CD4-positive, alpha-beta T cell (primary cell): ENCODE measurements at regions of chr6 and their contacts with region 1.

Region 1: DNA sequence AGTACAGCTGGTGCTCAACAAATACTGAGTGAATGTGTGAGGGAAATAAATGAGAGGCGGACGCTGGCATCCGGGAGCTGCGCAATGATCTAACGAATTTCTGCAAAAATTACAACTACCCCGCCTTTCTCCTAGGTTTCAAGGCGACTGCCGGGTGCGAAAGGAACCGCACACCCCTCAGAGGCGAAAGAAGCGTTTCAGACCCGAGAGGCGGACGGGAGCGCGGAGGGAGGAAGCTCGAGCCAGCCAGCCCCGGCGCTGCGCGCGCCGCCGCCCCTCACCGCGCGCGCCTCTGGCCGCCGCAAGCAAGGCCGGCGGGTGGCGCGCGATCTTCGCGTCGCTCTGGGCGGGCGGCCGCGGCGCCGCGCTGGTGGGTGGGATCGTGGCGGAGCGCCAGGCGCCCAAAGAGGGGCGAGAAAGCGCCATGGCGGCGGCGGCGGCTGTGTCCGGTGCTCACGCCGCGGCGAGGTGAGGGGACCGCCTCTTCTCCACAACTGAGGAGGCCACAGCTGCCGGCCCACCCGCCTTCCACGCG is at the start of gene BLTP3A:
- DNase-seq: peak; percentile 51 to 91 (median 71)
- ATAC-seq: peak; percentile 91
- H3K4me3 ChIP-seq: peak within 1 kb of the TSS; percentile 77
- H3K4me3 Mint-ChIP-seq: peak within 1 kb of the TSS; percentile 99
- H3K27ac ChIP-seq: peak within 1 kb of the TSS; percentile 44 to 73
- H3K27ac Mint-ChIP-seq: peak within 1 kb of the TSS; percentile 97
- H3K4me1 ChIP-seq: peaks cover 22% of the 10 kb centered on the region
- H3K4me1 Mint-ChIP-seq: peaks cover 26% of the 10 kb centered on the region
- H3K27me3 ChIP-seq: no peaks in the 10 kb centered on the region
- H3K27me3 Mint-ChIP-seq: no peaks in the 10 kb centered on the region
- CTCF ChIP-seq: peak; percentile 29
- total RNA-seq, gene BLTP3A: 7.6 to 8.1 TPM

Region 2: DNA sequence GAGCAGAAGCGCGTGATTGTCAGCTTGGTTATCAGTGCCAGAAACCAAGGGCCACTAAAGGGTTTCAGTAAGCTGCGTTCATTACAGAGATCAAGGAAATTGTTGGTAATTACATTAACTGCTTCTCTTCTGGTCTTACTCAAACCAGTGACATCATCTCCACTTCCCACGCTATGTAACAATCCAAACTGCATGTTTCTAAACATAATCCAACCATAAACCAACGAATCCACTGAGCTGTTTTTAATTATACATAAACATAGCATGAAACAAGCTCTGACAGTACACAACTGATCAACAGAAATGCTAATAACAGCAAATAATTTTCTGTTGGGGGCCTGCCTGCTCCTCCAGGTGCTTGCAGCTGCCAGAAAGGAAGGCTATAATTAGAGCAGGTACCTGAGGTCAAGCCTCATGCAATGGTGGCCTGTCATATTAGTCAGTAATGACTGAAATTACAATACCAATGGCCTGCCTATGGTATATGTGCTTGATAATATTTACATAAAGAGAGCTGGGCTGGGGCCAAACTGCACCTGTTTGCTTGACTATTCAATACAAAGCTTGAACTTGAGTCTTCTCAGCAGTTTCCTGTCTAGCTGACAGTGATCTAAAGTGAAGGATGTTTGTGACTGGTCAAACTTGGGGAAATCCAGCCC is 135.3 kb before region 1 on chr6:
- CTCF ChIA-PET with region 1: no interaction called
- POLR2A ChIA-PET with region 1: interaction called, 12 read pairs
- intact Hi-C with region 1: no loop called
- DNase-seq: peak in 6 of 14 experiments; percentile 6 to 60 (median 53)
- ATAC-seq: peak; percentile 61
- H3K4me3 ChIP-seq: peak overlapping the region; percentile 57
- H3K4me3 Mint-ChIP-seq: peak overlapping the region; percentile 90
- H3K27ac ChIP-seq: peak overlapping the region; percentile 55 to 85
- H3K27ac Mint-ChIP-seq: peak overlapping the region; percentile 84
- H3K4me1 ChIP-seq: peaks cover 31% of the 10 kb centered on the region
- H3K4me1 Mint-ChIP-seq: peaks cover 64% of the 10 kb centered on the region
- H3K27me3 ChIP-seq: no peaks in the 10 kb centered on the region
- H3K27me3 Mint-ChIP-seq: no peaks in the 10 kb centered on the region
- CTCF ChIP-seq: no peak

Region 3: GRCh38 chr6:34705241-34705640 is 86.5 kb before region 1 on chr6:
- CTCF ChIA-PET with region 1: no interaction called
- POLR2A ChIA-PET with region 1: no interaction called
- intact Hi-C with region 1: no loop called
- DNase-seq: no peak
- ATAC-seq: no peak
- H3K4me3 ChIP-seq: no peak overlapping the region
- H3K4me3 Mint-ChIP-seq: no peak overlapping the region
- H3K27ac ChIP-seq: no peak overlapping the region
- H3K27ac Mint-ChIP-seq: no peak overlapping the region
- H3K4me1 ChIP-seq: no peaks in the 10 kb centered on the region
- H3K4me1 Mint-ChIP-seq: peaks cover 4% of the 10 kb centered on the region
- H3K27me3 ChIP-seq: no peaks in the 10 kb centered on the region
- H3K27me3 Mint-ChIP-seq: no peaks in the 10 kb centered on the region
- CTCF ChIP-seq: no peak

Region 4: GRCh38 chr6:34771727-34772126 is 20.0 kb before region 1 on chr6:
- CTCF ChIA-PET with region 1: interaction called, 3 read pairs
- POLR2A ChIA-PET with region 1: interaction called, 11 read pairs
- intact Hi-C with region 1: no loop called
- DNase-seq: no peak
- ATAC-seq: no peak
- H3K4me3 ChIP-seq: no peak overlapping the region
- H3K4me3 Mint-ChIP-seq: no peak overlapping the region
- H3K27ac ChIP-seq: peak overlapping the region in 1 of 2 donors; percentile 1
- H3K27ac Mint-ChIP-seq: no peak overlapping the region
- H3K4me1 ChIP-seq: peaks cover 4% of the 10 kb centered on the region
- H3K4me1 Mint-ChIP-seq: peaks cover 17% of the 10 kb centered on the region
- H3K27me3 ChIP-seq: no peaks in the 10 kb centered on the region
- H3K27me3 Mint-ChIP-seq: no peaks in the 10 kb centered on the region
- CTCF ChIP-seq: no peak

Region 5: DNA sequence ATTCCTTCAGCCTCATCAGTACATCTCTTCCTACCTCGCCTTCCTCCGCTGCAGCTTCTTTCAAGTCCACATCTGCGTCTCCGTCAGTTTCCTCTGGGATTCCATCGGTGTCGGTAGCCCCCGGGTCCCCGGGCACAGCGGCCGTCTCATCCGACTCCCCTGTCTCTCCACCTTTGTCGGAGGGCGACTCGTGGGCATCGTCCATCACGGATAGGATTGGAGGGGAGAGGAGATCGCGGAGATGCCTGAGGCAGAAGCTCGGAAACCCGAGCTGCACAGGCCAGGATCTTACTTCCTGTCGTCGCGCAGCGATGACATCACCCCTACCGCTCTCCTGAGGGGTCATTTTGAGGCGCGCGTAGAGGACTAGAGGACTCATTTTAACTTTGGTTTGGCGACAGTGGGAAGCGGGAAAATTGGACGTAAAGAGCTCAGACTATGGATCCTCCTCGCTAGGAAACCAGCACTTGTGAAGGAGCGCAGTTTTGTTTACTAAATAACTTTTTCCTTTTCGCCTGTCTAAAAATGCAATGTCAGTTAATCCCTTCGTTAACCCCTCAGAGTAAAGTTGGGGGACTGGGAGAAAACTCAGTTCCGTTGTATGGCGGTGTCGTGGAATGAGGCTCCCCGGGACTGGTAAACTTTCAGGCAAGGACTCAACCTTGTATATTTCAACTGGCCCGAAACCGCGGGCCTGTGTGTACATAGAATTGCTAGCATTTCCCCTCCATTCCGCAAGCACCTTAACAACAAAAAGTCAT is 96.2 kb after region 1 on chr6 and contains the start of gene TAF11:
- CTCF ChIA-PET with region 1: interaction called, 3 read pairs
- POLR2A ChIA-PET with region 1: interaction called, 48 read pairs
- intact Hi-C with region 1: loop called in 1 of 2 experiments (anchors 5 kb)
- DNase-seq: peak; percentile 78 to 96 (median 87)
- ATAC-seq: peak; percentile 69
- H3K4me3 ChIP-seq: peak within 1 kb of the TSS; percentile 98
- H3K4me3 Mint-ChIP-seq: peak within 1 kb of the TSS; percentile 97
- H3K27ac ChIP-seq: peak within 1 kb of the TSS; percentile 90 to 93
- H3K27ac Mint-ChIP-seq: peak within 1 kb of the TSS; percentile 97
- H3K4me1 ChIP-seq: peaks cover 36% of the 10 kb centered on the region
- H3K4me1 Mint-ChIP-seq: peaks cover 62% of the 10 kb centered on the region
- H3K27me3 ChIP-seq: no peaks in the 10 kb centered on the region
- H3K27me3 Mint-ChIP-seq: no peaks in the 10 kb centered on the region
- CTCF ChIP-seq: no peak
- total RNA-seq, gene TAF11: 31.5 to 38.1 TPM